Activated naive CD4-positive, alpha-beta T cell treated with anti-CD3 and anti-CD28 coated beads for 36 hours (primary cell): ENCODE measurements at regions of chr13 and their contacts with region 1.

Region 1: GRCh38 chr13:26929971-26930730 is 169.6 kb upstream of the GPR12 start:
- DNase-seq: peak; percentile 79
- H3K4me3 Mint-ChIP-seq: no peak overlapping the region
- H3K27ac Mint-ChIP-seq: no peak overlapping the region
- H3K4me1 Mint-ChIP-seq: no peaks in the 10 kb centered on the region
- H3K27me3 Mint-ChIP-seq: peaks cover 3% of the 10 kb centered on the region

Region 2: GRCh38 chr13:26914624-26915023 is 15.5 kb before region 1 on chr13:
- CTCF ChIA-PET with region 1: interaction called, 18 read pairs
- intact Hi-C with region 1: no loop called
- DNase-seq: peak; percentile 40
- H3K4me3 Mint-ChIP-seq: no peak overlapping the region
- H3K27ac Mint-ChIP-seq: peak overlapping the region; percentile 4
- H3K4me1 Mint-ChIP-seq: peaks cover 6% of the 10 kb centered on the region
- H3K27me3 Mint-ChIP-seq: no peaks in the 10 kb centered on the region